ENCODE measurements at regions of chr17 and their contacts with region 1.

Region 1: GRCh38 chr17:28951991-28952975 is 965 bp upstream of the PHF12 start:
- DNase-seq: peak; percentile 100
- H3K4me3 Mint-ChIP-seq: no peak overlapping the region
- H3K27ac Mint-ChIP-seq: no peak overlapping the region
- H3K4me1 Mint-ChIP-seq: peaks cover 6% of the 10 kb centered on the region
- H3K27me3 Mint-ChIP-seq: no peaks in the 10 kb centered on the region
- CTCF ChIP-seq: no peak

Region 2: DNA sequence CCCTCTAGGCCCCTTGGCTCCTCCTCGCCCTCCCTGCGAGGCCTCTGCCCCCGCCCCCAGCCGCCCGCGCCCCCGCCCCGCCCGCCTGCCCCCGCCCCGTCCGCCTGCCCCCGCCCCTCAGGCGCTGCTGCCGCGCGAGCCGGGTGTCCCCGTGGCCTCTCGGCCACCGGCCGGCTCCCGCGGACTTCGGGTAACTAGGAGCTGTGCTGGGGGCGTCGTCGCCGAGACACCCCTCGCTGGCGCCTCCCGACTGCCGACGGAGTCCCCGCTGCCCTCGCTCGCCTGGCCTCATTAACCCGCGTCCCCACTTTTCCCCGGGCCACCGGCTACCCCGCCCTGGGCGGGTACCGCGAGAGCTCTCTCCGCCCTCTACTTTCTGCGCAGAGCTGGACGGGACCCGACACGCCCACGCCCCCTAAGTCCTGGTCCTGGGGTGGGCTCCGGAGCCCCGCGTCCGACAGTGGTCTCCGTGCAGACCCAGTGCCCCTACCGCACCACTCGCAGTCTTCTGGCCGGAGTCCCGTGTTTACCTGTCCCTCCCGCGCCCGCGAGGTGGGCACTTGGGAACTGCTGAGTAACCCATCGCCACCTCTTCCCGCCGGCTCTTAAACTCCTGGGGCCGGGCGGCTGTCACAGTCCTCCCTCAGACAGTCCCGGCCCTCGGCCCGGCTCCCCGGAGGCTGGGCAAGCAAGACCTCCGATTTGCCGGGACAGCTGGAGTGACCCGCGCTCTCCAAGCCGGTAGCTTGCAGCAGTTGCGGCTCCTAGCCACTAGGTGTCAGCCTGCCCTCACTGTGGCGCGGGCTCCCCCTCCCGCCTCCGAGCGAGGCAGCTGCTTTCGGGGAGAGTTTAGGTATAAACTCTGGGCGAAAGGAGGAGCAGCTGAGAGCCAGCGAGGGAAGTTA is 225.8 kb before region 1 on chr17 and contains the start of gene TLCD1:
- CTCF ChIA-PET with region 1: interaction called, 19 read pairs
- POLR2A ChIA-PET with region 1: interaction called, 342 read pairs
- intact Hi-C with region 1: loop called (anchors 1 kb)
- DNase-seq: peak; percentile 97
- H3K4me3 Mint-ChIP-seq: peak within 1 kb of the TSS; percentile 91
- H3K27ac Mint-ChIP-seq: peak within 1 kb of the TSS; percentile 99
- H3K4me1 Mint-ChIP-seq: peaks cover 27% of the 10 kb centered on the region
- H3K27me3 Mint-ChIP-seq: no peaks in the 10 kb centered on the region
- CTCF ChIP-seq: peak; percentile 99
- total RNA-seq, gene TLCD1: 13.4 and 18.7 TPM in 2 replicates

Region 3: DNA sequence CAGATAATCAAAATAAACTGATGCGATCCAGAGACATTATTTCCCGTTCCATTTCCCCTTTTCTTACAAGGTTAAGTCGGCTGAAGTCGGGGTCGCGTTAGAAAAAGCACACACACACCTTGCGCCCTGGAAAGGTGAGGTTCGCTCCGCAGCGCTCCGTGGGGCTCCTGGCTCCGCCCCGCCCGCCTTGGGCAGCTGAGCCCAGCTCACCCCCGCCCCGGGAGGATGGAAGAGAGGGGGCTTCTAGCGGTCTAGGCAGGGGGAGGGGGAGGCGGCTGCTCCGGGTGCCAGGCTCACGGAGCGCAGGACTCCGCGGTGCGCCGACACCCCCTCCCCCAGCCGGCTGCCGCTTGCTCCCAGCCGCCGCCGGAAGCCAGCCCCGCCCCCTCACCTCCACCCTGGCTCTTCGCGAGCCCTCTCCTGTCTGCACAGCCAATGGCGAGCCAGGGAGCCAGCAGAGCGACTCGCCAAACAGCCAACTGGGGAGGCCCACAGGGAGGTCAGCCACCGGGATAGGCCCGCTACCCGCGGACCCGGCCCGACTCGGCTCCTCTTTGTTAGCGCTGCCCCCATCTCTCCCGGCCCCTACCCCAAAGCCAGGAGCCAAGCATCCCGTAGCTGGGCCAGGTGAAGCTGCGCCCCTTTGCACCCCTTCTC is 140.1 kb before region 1 on chr17:
- CTCF ChIA-PET with region 1: interaction called, 3 read pairs
- POLR2A ChIA-PET with region 1: interaction called, 42 read pairs
- intact Hi-C with region 1: loop called (anchors 5 kb)
- DNase-seq: peak; percentile 97
- H3K4me3 Mint-ChIP-seq: peak overlapping the region; percentile 90
- H3K27ac Mint-ChIP-seq: peak overlapping the region; percentile 98
- H3K4me1 Mint-ChIP-seq: peaks cover 28% of the 10 kb centered on the region
- H3K27me3 Mint-ChIP-seq: no peaks in the 10 kb centered on the region
- CTCF ChIP-seq: no peak

Region 4: GRCh38 chr17:28902819-28903545 is 49.3 kb before region 1 on chr17 and contains the start of gene DHRS13:
- CTCF ChIA-PET with region 1: interaction called, 7 read pairs
- POLR2A ChIA-PET with region 1: interaction called, 24 read pairs
- intact Hi-C with region 1: loop called (anchors 2 kb)
- DNase-seq: peak; percentile 93
- H3K4me3 Mint-ChIP-seq: peak within 1 kb of the TSS; percentile 72
- H3K27ac Mint-ChIP-seq: peak within 1 kb of the TSS; percentile 63
- H3K4me1 Mint-ChIP-seq: peaks cover 30% of the 10 kb centered on the region
- H3K27me3 Mint-ChIP-seq: no peaks in the 10 kb centered on the region
- CTCF ChIP-seq: peak; percentile 98
- total RNA-seq, gene DHRS13: 9.1 and 9.5 TPM in 2 replicates

Region 5: GRCh38 chr17:28967221-28968140 is 15.2 kb after region 1 on chr17:
- CTCF ChIA-PET with region 1: interaction called, 22 read pairs
- POLR2A ChIA-PET with region 1: interaction called, 9 read pairs
- intact Hi-C with region 1: no loop called
- DNase-seq: no peak
- H3K4me3 Mint-ChIP-seq: no peak overlapping the region
- H3K27ac Mint-ChIP-seq: no peak overlapping the region
- H3K4me1 Mint-ChIP-seq: no peaks in the 10 kb centered on the region
- H3K27me3 Mint-ChIP-seq: peaks cover 42% of the 10 kb centered on the region
- CTCF ChIP-seq: no peak

Region 6: DNA sequence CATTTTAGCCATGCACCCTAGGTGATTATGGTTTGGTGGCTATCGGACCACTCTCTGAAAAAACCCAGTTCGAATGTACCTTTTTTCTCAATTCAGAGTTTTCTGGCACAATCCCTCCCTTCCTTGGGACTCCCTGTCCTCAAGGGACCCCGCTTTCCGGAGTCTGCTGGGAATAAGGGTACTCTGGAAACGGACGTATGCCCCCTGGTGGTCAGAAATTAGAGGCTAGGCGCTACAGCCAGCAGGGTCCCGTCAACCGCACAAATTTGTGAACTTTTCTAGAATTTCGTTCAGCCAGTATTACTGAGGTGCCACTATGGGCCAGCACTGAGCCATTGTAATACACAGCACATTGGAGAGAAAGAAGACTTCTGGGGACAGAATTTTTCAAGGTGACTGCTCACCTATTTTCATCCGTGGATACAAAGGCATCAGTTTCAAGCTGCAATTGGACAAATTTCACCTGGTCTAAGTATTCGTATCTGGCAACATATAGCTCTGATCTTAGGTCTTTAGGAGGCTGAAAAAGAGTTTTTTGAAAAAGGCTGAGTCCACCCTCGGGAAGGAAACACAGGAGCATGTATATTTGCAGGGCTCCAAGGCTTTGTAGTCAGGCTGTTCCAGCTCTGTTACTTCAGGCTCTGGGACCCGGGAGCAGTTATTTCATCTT is 267.2 kb after region 1 on chr17:
- CTCF ChIA-PET with region 1: no interaction called
- POLR2A ChIA-PET with region 1: no interaction called
- intact Hi-C with region 1: no loop called
- DNase-seq: peak; percentile 83
- H3K4me3 Mint-ChIP-seq: no peak overlapping the region
- H3K27ac Mint-ChIP-seq: no peak overlapping the region
- H3K4me1 Mint-ChIP-seq: peaks cover 23% of the 10 kb centered on the region
- H3K27me3 Mint-ChIP-seq: no peaks in the 10 kb centered on the region
- CTCF ChIP-seq: peak; percentile 87

Region 7: GRCh38 chr17:29293890-29294579 is 341.8 kb after region 1 on chr17 and contains the start of gene NUFIP2:
- CTCF ChIA-PET with region 1: no interaction called
- POLR2A ChIA-PET with region 1: interaction called, 10 read pairs
- intact Hi-C with region 1: no loop called
- DNase-seq: peak; percentile 98
- H3K4me3 Mint-ChIP-seq: peak within 1 kb of the TSS; percentile 99
- H3K27ac Mint-ChIP-seq: peak within 1 kb of the TSS; percentile 93
- H3K4me1 Mint-ChIP-seq: peaks cover 14% of the 10 kb centered on the region
- H3K27me3 Mint-ChIP-seq: no peaks in the 10 kb centered on the region
- CTCF ChIP-seq: no peak
- total RNA-seq, gene NUFIP2: 78.6 and 88.0 TPM in 2 replicates